ENCODE measurements at regions of chr10 and their contacts with region 1.

Region 1: DNA sequence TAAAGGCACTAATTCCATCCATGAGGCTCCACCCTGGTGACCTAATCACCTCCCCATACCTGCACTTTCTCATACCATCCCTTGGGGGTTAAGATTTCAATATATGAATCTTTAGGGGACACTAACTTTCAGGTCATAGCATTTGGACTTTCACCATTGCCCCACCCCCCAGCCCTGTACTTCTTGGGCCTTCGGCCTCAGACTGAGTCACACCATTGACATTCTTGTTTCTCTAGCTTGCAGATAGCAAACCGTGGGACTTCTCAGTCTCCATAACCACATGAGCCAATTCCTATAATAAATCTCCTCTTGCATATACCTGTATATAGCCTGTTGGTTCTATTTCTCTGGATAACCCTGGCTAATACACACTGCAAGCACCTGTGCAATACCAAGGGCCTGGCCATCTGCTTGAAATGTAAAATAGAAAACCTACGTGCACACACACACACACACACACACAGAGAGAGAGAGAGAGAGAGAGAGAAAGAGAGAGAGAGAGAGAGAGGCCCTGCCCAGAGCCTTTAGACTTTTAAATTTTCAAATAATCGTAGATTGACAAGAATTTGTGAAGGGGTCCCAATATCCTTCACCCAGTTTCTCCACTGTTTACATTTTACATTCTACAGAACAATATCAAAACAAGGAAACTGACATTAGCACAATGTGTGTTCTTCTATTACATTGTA is 25.3 kb downstream of the ANXA8 start:
- DNase-seq: no peak
- ATAC-seq: no peak
- H3K4me3 ChIP-seq: no peak overlapping the region
- H3K27ac ChIP-seq: no peak overlapping the region
- H3K4me1 ChIP-seq: no peaks in the 10 kb centered on the region
- H3K27me3 ChIP-seq: peaks cover 0 to 5% (median 0%) of the 10 kb centered on the region in 9 donors
- CTCF ChIP-seq: no peak
- POLR2A ChIP-seq: no peak

Region 2: DNA sequence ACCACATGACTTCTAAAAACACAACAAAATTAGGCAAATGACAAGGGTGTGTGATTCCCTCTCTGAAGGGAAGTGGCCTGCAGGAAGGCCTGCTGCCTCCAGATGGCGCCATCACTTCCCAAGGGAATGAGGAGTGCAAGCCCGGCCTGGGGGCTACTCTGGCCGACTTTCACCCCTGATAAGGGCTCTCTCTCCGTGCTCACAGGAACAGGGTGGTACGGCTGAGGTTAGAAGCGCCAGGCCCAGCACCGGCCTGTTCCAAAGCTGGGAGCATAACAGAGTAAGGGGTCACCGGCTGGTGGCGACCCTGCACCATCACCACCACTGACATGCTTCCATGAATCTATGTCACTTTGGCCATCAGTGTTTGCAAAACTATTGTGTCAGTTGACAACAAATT is 97.3 kb before region 1 on chr10:
- intact Hi-C with region 1: loop called in 1 of 10 experiments (anchors 10 kb)
- DNase-seq: no peak
- ATAC-seq: peak in 1 of 4 donors; percentile 49
- H3K4me3 ChIP-seq: no peak overlapping the region
- H3K27ac ChIP-seq: no peak overlapping the region
- H3K4me1 ChIP-seq: peaks cover 0 to 13% (median 0%) of the 10 kb centered on the region in 12 donors
- H3K27me3 ChIP-seq: no peaks in the 10 kb centered on the region
- CTCF ChIP-seq: peak; percentile 37 to 70 (median 56)
- POLR2A ChIP-seq: no peak

Region 3: GRCh38 chr10:48364659-48365405 is 906.2 kb after region 1 on chr10:
- intact Hi-C with region 1: no loop called
- DNase-seq: peak in 1 of 5 donors; percentile 10
- ATAC-seq: peak in 2 of 4 donors; percentile 65 to 82
- H3K4me3 ChIP-seq: peak overlapping the region in 3 of 12 donors; percentile 2 to 26 (median 17)
- H3K27ac ChIP-seq: peak overlapping the region in 7 of 12 donors; percentile 1 to 53 (median 51)
- H3K4me1 ChIP-seq: peaks cover 4 to 48% (median 33%) of the 10 kb centered on the region in 12 donors
- H3K27me3 ChIP-seq: no peaks in the 10 kb centered on the region
- CTCF ChIP-seq: no peak
- POLR2A ChIP-seq: no peak

Measured in heart left ventricle (tissue), 16 donors.